HEK293 (cell line): ENCODE measurements at regions of chr14 and their contacts with region 1.

Region 1: GRCh38 chr14:36553656-36554260 is 28.7 kb downstream of the NKX2-8 start:
- H3K4me3 ChIP-seq: no peak overlapping the region
- H3K27ac ChIP-seq: no peak overlapping the region
- H3K4me1 ChIP-seq: no peaks in the 10 kb centered on the region
- CTCF ChIP-seq: peak; percentile 44; the same call in 1 of the 2 replicates

Region 2: DNA sequence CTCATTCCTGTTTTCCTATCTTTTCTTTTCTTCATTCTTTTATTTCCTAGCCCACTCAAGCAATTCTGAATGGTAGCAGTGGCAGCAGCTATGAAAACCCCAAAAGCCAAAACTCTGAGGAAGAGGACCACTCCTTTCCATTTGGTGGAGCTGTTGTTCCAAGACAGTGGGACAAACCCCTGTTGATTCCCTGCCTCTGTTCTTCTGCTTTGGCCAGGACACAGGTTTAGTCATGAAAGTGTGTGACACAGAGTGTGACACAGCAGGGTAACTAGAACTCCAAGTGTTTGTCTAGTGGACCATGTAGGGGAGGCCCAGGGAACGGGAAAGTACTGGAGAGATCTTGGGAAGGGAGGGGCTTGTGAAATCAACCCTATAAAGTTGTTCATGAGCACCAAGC is 448.4 kb before region 1 on chr14:
- CTCF ChIA-PET with region 1: interaction called, 13 read pairs
- POLR2A ChIA-PET with region 1: no interaction called
- H3K4me3 ChIP-seq: no peak overlapping the region
- H3K27ac ChIP-seq: no peak overlapping the region
- H3K4me1 ChIP-seq: no peaks in the 10 kb centered on the region
- CTCF ChIP-seq: peak; percentile 41; the same call in 1 of the 2 replicates

Region 3: DNA sequence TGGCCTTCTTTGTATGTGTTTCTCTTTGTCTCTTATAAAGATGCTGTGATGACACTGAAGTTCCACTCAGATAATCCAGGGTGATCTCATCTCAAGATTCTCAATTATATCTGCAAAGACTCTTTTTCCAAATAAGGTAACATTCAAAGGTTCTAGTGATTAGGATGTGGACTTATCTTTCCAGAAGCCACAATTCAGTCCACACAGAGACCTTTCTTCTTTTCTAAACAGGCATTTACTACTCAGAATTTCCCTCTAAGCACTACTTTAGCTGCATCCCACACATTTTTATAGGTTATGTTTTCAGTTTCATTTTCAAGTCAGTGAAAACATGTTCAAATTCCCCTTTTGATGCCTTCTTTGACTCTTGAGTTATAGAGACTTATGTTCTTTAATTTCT is 24.7 kb before region 1 on chr14:
- CTCF ChIA-PET with region 1: interaction called, 42 read pairs
- POLR2A ChIA-PET with region 1: no interaction called
- H3K4me3 ChIP-seq: no peak overlapping the region
- H3K27ac ChIP-seq: no peak overlapping the region
- H3K4me1 ChIP-seq: no peaks in the 10 kb centered on the region
- CTCF ChIP-seq: no peak

Region 4: GRCh38 chr14:36591482-36591881 is 37.7 kb after region 1 on chr14:
- CTCF ChIA-PET with region 1: interaction called, 13 read pairs
- POLR2A ChIA-PET with region 1: no interaction called
- H3K4me3 ChIP-seq: no peak overlapping the region
- H3K27ac ChIP-seq: no peak overlapping the region
- H3K4me1 ChIP-seq: no peaks in the 10 kb centered on the region
- CTCF ChIP-seq: no peak

Region 5: DNA sequence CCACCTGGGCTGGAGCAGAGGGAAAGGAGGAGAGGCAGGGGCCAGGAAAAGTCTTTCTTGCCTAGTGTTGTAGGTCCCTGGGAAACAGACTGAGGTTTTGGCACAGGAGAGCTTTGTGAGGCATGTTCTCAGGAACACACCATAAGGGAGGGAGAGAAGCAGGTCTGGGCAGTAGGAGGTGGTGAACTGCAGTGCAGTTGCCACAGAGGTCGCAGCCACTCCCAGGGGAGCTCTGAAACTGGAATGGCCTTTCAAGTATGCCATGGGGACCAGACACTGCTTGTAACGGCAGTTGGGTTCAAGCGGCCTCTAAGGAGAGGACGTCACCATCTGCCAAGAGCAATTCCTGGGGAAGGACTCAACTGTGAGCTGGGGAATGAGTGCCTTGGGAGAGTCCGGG is 64.1 kb after region 1 on chr14:
- CTCF ChIA-PET with region 1: no interaction called
- POLR2A ChIA-PET with region 1: no interaction called
- H3K4me3 ChIP-seq: no peak overlapping the region
- H3K27ac ChIP-seq: no peak overlapping the region
- H3K4me1 ChIP-seq: no peaks in the 10 kb centered on the region
- CTCF ChIP-seq: no peak

Region 6: GRCh38 chr14:36717363-36717762 is 163.6 kb after region 1 on chr14:
- CTCF ChIA-PET with region 1: no interaction called
- POLR2A ChIA-PET with region 1: no interaction called
- H3K4me3 ChIP-seq: no peak overlapping the region
- H3K27ac ChIP-seq: no peak overlapping the region
- H3K4me1 ChIP-seq: no peaks in the 10 kb centered on the region
- CTCF ChIP-seq: no peak

Region 7: DNA sequence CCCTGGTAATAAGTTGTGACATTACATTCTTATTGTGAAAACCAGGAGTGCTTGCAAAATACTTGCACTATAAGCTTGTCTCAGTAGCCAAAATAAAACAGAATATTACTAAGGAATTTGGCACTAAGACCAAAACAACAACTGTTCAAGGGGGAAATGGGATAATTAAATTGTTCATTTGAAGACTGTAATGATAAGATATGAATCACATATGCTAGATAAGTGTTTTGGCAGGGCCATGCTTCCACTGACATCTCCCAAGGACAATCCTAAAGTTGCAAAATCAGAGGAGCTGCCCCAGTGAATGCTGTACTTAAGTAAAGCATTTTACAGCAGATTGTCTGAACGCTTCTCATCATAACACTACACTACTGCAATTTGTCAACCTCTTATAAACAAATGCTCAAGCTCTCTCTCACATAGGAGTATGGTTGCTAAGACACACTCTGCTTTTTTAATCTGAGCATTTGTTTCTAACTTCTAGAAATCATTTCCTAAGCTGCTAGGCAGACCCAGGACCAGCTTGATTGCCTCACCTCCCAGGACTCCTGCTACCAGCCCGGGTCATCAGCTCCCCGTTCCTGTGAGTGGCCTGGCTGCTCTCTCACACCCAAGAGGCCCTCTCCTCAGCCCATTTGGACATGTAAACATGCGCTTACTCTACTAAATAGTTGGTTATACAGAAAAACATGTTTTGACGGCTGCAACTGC is 299.4 kb after region 1 on chr14:
- CTCF ChIA-PET with region 1: no interaction called
- POLR2A ChIA-PET with region 1: no interaction called
- H3K4me3 ChIP-seq: no peak overlapping the region
- H3K27ac ChIP-seq: no peak overlapping the region; the same call in 1 of the 2 replicates
- H3K4me1 ChIP-seq: peaks cover 30% of the 10 kb centered on the region
- CTCF ChIP-seq: no peak

Region 8: DNA sequence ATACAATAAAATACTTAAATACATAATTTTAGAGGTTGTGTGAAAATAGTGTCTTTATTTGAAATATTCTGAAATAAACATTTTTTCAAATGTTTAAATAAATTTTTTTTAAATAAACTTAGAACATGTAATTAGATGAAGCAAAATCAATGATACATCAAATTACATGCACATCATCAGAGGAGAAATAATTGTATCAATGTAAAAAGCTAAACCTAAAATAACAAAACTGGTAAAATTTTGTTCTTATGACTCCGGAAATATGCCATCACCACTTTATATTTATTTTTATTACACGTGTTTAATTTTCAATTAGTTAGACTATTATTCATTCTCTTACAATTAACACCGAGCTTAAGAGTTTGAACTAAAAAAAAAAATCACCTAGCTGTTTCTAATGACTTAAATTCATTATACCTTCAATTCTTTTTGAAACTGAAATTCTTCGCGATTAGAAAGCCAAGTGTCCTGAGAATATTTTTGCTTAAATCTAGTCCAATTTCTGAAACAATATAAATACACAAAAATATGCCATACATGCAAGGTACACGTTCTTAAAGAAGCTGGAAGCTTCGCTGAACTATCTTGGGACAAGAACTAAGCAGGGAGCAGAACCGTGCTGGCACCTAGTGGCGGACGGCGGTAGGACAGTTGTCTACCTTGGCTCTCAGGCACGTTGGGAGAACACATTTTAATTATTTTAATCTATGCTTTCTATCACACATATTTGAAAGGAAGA is 388.2 kb after region 1 on chr14:
- CTCF ChIA-PET with region 1: interaction called, 37 read pairs
- POLR2A ChIA-PET with region 1: no interaction called
- H3K4me3 ChIP-seq: no peak overlapping the region
- H3K27ac ChIP-seq: no peak overlapping the region
- H3K4me1 ChIP-seq: peaks cover 13% of the 10 kb centered on the region
- CTCF ChIP-seq: peak; percentile 66

Region 9: DNA sequence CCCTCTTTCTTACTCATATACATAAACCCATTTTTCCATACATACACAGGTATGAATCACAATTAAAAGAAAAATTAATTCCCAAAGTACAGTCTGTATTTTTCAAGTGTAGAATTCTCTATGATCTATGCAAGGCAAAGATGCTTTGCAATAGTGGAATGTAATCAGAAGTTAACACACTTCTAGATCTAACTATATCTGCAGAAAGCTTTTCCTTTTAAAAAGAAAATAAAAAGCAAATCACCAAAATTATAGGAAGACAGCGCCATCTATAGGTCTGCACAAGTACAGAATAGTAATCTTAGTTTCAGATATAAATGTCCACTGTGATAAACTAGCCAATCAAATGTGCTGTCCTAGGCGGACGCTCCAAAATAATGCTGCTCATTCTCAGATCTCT is 596.7 kb after region 1 on chr14:
- CTCF ChIA-PET with region 1: interaction called, 49 read pairs
- POLR2A ChIA-PET with region 1: no interaction called
- H3K4me3 ChIP-seq: no peak overlapping the region; the same call in 1 of the 2 replicates
- H3K27ac ChIP-seq: no peak overlapping the region
- H3K4me1 ChIP-seq: peaks cover 6% of the 10 kb centered on the region; the same call in 1 of the 2 replicates
- CTCF ChIP-seq: peak; percentile 19; the same call in 1 of the 2 replicates